ENCODE measurements at regions of chr11 and their contacts with region 1.

Region 1: GRCh38 chr11:88231894-88232482 is 56.7 kb upstream of the RAB38 start:
- DNase-seq: no peak
- H3K4me3 ChIP-seq: no peak overlapping the region
- H3K27me3 ChIP-seq: no peaks in the 10 kb centered on the region
- CTCF ChIP-seq: peak; percentile 74

Region 2: DNA sequence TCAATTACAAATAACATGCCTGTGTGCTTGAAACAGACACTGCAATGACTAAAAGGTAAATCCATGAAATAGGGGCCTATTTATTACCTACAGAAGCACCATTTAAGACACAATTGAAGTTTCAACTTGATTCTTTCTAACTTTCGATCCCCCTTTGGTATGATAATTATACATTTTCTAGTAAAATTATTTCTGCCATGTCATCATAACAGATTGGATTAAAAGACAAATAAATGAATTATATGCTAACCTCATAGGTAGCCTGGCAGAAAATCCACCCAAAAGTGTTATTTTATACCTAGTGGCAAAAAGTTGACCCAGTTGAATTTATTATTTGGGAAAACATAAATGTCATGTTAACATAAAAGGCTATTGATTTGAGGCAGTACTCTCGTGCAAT is 297.8 kb before region 1 on chr11:
- CTCF ChIA-PET with region 1: no interaction called
- POLR2A ChIA-PET with region 1: no interaction called
- DNase-seq: no peak
- H3K4me3 ChIP-seq: no peak overlapping the region
- H3K27me3 ChIP-seq: no peaks in the 10 kb centered on the region; the same call in 1 of the 2 replicates
- CTCF ChIP-seq: no peak

Region 3: DNA sequence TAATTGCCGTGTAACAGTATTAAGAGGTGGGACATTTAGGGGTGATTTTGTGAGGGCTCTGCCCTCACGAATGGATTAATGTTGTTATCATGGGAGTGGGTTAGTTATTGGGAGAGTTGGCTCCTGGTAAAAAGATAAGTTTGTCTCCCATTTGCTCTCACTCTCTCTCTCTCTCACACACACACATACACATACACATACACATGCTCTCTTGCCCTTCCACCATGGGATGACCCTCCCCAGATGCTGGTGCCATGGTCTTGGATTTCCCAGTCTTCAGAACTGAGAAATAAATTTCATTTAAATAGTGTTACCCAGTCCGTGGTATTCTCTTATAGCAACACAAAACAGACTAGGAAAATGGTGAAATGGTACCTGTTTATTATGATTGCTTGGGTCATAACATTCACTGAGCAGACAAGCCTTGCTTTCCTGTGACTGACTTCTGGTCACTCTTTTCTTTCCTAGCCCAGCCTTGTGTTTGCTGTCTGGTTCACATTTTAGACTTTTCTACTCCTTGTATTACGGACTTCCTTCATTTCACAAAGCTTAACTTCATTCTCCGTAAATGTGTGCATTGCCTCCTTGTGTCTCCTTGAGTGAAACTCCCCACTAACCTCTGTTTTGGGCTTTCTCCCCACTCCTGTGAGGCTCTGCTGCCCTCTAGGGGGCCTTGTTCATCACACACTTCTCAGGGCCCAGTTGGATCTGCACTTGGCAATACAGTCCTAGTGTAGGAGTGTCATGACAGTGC is 312.1 kb after region 1 on chr11:
- CTCF ChIA-PET with region 1: interaction called, 26 read pairs
- POLR2A ChIA-PET with region 1: no interaction called
- DNase-seq: peak; percentile 69
- H3K4me3 ChIP-seq: no peak overlapping the region
- H3K27me3 ChIP-seq: no peaks in the 10 kb centered on the region
- CTCF ChIP-seq: peak; percentile 98

Measured in BJ (cell line).